PC-9 (cell line): ENCODE measurements at regions of chr4 and their contacts with region 1.

Region 1: GRCh38 chr4:6264225-6264540 is 5.5 kb upstream of the WFS1 start:
- DNase-seq: peak in 1 of 2 experiments; percentile 57
- H3K4me3 ChIP-seq: no peak overlapping the region
- H3K27ac ChIP-seq: no peak overlapping the region
- H3K4me1 ChIP-seq: peaks cover 6% of the 10 kb centered on the region; the same call in 1 of the 2 replicates
- H3K27me3 ChIP-seq: 0 out of 2 replicates have a peak, but pooled peaks cover 3% of the 10 kb centered on the region
- CTCF ChIP-seq: peak; percentile 57

Region 2: GRCh38 chr4:6319530-6320150 is 55.5 kb after region 1 on chr4:
- CTCF ChIA-PET with region 1: interaction called, 17 read pairs
- POLR2A ChIA-PET with region 1: no interaction called
- intact Hi-C with region 1: no loop called
- DNase-seq: no peak
- H3K4me3 ChIP-seq: no peak overlapping the region
- H3K27ac ChIP-seq: no peak overlapping the region
- H3K4me1 ChIP-seq: no peaks in the 10 kb centered on the region
- H3K27me3 ChIP-seq: no peaks in the 10 kb centered on the region
- CTCF ChIP-seq: no peak

Region 3: DNA sequence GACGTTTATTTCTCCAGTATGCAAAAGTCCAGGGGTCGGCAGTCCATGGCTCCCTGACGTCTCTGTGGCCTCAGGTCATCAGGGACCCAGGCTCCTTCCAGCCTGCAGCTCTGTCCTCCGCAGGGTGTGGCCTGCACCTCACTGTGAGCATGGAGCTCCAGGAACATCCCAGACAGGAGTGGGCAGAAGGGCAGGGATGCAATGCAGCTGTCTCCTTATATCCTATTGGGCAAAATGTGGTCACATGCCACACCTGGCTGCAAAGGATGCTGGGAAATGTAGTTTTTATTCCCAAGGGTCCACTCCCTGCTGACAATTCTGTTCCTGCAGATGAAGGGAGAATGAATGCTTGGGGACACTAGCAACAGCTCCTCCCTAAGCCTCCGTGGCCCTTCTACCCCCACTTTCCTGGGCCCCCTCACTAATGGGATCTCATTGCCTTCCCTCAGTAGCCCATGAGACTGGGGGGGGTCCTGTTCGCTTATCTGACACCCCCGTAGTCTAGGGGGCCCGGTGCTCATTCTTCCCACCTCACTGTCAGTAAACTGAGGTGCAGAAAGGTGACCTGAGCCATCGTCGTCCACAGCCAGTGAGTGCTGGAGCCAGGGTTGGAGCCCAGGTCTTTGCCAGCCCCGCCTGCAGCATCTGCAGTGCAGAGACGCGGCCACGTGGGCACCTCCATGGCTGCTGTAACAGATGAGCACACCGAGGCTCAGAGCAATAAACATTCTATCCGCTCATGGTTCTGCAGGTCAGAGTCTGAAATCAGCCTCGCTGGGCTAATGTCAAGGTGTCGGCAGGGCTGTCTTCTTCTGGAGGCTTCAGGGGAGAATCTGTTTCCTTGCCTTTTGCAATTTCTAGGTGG is 809.6 kb after region 1 on chr4:
- CTCF ChIA-PET with region 1: interaction called, 16 read pairs
- POLR2A ChIA-PET with region 1: no interaction called
- intact Hi-C with region 1: no loop called
- DNase-seq: peak; percentile 33 to 46
- H3K4me3 ChIP-seq: no peak overlapping the region
- H3K27ac ChIP-seq: no peak overlapping the region
- H3K4me1 ChIP-seq: peaks cover 12% of the 10 kb centered on the region; the same call in 1 of the 2 replicates
- H3K27me3 ChIP-seq: no peaks in the 10 kb centered on the region
- CTCF ChIP-seq: no peak

Region 4: DNA sequence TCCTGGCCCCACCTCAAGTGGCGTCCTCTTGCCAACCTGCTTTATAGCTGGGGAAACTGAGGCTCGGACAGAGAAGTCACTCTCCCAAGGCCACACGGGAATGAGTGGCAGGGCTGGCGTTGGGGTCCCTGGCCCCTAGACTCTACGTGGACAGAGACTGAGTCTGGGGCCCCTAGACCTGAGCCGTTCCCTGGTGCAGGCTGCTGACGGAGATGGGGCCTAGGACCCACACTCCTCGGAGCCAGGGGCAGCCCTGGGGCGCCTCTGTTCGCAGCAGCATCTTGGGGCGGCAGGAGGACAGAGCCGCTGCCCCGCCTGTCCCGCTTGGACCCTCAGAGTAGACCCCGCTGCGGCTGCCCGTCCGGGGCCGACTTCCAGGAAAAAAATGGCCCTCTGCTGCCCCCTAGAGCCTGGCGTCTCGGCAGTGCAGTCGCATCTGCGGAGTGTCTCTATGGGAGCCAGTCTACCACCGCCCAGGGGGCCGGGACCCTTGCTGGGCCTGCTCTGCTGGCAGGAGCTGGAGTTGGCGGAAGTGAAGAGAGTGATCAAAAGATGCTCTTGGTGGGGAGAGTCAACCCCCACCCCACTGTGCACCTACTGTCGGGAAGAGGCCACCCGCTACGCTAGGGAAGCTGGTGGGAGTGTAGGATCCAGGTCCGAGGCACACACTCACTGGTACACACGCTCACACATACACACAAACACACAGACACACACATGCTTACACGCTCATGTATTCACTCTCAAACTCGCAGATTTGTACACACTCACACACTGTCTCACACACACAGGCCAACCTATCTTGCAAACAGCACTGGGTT is 1455.4 kb after region 1 on chr4:
- CTCF ChIA-PET with region 1: no interaction called
- POLR2A ChIA-PET with region 1: interaction called, 11 read pairs
- intact Hi-C with region 1: no loop called
- DNase-seq: peak in 1 of 2 experiments; percentile 54
- H3K4me3 ChIP-seq: no peak overlapping the region
- H3K27ac ChIP-seq: no peak overlapping the region
- H3K4me1 ChIP-seq: no peaks in the 10 kb centered on the region
- H3K27me3 ChIP-seq: no peaks in the 10 kb centered on the region
- CTCF ChIP-seq: peak; percentile 84

Region 5: GRCh38 chr4:8128100-8128856 is 1864.1 kb after region 1 on chr4:
- CTCF ChIA-PET with region 1: no interaction called
- POLR2A ChIA-PET with region 1: no interaction called
- intact Hi-C with region 1: no loop called
- DNase-seq: no peak
- H3K4me3 ChIP-seq: no peak overlapping the region
- H3K27ac ChIP-seq: no peak overlapping the region
- H3K4me1 ChIP-seq: no peaks in the 10 kb centered on the region
- H3K27me3 ChIP-seq: peaks cover 25% of the 10 kb centered on the region; the same call in 1 of the 2 replicates
- CTCF ChIP-seq: no peak